BJ (cell line): ENCODE measurements at regions of chr3 and their contacts with region 1.

Region 1: DNA sequence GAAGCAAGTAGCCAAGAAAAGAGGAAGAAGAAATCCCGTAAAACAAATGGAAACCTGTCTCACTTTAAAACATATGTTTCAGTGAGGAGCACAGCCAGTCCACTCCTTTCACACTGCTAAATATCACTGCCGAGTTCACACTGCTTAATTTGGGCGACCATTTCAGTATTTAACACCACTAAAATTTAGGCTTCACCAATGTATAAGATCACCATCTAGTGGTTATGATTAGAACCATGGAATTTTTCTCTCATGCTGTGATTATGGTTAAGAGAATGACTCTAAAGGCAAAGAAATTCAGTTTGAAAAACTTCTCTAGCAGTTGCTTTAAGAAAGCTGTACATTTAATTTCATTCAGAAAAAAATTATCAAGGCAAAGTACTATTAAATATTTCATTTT is 16.6 kb downstream of the SLC4A7 start:
- DNase-seq: no peak
- H3K4me3 ChIP-seq: no peak overlapping the region
- H3K27me3 ChIP-seq: no peaks in the 10 kb centered on the region
- CTCF ChIP-seq: peak; percentile 57

Region 2: GRCh38 chr3:27095553-27096222 is 371.9 kb before region 1 on chr3:
- CTCF ChIA-PET with region 1: no interaction called
- POLR2A ChIA-PET with region 1: no interaction called
- DNase-seq: no peak
- H3K4me3 ChIP-seq: no peak overlapping the region
- H3K27me3 ChIP-seq: no peaks in the 10 kb centered on the region
- CTCF ChIP-seq: no peak

Region 3: DNA sequence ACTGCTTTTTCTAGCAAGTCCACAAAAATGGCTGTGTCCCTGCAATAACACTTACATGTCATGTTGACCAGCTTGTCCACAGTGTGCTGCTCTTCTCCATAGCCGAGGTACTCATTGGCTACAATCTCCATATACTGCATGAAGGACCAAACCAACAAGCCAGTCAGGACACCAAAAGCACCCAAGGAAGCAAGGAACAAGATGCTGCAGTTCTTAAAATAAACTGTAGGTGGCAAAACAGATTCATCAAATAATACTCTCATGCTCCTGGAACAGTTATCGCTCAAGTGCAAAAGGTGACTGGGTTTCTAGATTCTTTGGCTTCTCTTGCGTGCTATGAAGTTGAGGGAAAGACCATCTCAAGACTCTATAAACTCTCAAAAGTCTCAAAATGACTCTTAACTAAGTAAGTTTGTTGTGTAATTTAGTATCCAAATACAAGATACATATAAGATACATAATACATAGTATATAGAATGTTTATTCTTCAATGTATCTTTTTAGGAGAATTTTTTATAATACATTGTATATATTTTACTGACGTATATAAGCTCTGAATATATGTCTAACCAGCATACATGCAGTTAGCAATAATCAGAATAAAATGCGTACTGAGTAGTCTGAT is 155.4 kb before region 1 on chr3:
- CTCF ChIA-PET with region 1: interaction called, 12 read pairs
- POLR2A ChIA-PET with region 1: no interaction called
- DNase-seq: peak; percentile 35
- H3K4me3 ChIP-seq: no peak overlapping the region
- H3K27me3 ChIP-seq: no peaks in the 10 kb centered on the region
- CTCF ChIP-seq: peak; percentile 71

Region 4: GRCh38 chr3:27454914-27455313 is 12.6 kb before region 1 on chr3:
- CTCF ChIA-PET with region 1: interaction called, 10 read pairs
- POLR2A ChIA-PET with region 1: interaction called, 6 read pairs
- DNase-seq: no peak
- H3K4me3 ChIP-seq: no peak overlapping the region
- H3K27me3 ChIP-seq: no peaks in the 10 kb centered on the region
- CTCF ChIP-seq: no peak

Region 5: GRCh38 chr3:27484015-27484844 is 16.7 kb after region 1 on chr3 and contains the start of gene SLC4A7:
- CTCF ChIA-PET with region 1: no interaction called
- POLR2A ChIA-PET with region 1: no interaction called
- DNase-seq: peak; percentile 71
- H3K4me3 ChIP-seq: peak within 1 kb of the TSS; percentile 91
- H3K27me3 ChIP-seq: no peaks in the 10 kb centered on the region
- CTCF ChIP-seq: no peak
- polyA plus RNA-seq, gene SLC4A7: 15.4 and 36.7 TPM in 2 replicates